ENCODE measurements at regions of chr19 and their contacts with region 1.

Region 1: GRCh38 chr19:33176670-33177416 is 17.3 kb upstream of the LRP3 start:
- DNase-seq: peak; percentile 95
- H3K4me3 ChIP-seq: peak overlapping the region; percentile 85
- H3K27ac ChIP-seq: peak overlapping the region; percentile 51
- H3K4me1 ChIP-seq: peaks cover 17% of the 10 kb centered on the region
- CTCF ChIP-seq: no peak; the same call in 1 of the 2 replicates

Region 2: DNA sequence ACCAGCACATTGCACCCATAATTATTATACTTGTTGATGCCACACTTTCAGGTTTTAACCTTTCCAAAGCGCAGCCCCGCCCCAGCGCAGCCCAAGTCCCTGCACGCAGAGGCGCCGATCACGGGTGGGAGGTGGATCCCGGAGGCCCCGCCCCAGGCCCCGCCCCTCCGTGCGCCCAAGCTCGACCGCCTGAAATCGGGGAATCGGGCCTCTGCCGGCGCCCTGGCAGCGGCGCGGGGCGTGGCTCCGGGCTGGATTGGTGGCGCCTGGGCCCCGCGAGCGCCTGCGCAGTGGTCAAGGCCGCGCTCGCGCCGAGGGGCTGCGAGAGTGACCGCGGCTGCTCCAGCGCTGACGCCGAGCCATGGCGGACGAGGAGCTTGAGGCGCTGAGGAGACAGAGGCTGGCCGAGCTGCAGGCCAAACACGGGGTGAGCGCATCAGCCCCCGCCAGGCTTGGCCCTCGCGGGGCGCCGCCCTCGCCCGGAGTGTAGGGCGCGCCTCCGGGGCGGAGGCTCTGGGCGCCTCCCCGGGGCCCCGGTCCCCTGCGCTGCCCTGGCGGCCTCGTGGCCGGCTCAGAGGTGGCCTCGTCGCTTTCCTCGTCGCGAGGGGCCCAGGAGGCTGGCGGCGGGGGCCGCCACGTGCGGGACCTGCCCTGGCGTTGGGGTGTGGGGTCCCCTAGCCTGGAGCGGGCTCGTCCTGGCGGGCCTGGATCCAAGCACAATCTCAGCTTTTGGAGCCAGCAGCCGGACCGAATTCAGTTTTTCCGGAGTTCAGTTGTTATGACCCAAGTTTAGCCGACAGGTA is 595.7 kb before region 1 on chr19 and contains the start of gene PDCD5:
- CTCF ChIA-PET with region 1: no interaction called
- POLR2A ChIA-PET with region 1: no interaction called
- intact Hi-C with region 1: loop called (anchors 5 kb)
- DNase-seq: peak; percentile 95
- H3K4me3 ChIP-seq: peak within 1 kb of the TSS; percentile 93
- H3K27ac ChIP-seq: peak within 1 kb of the TSS; percentile 32
- H3K4me1 ChIP-seq: peaks cover 10% of the 10 kb centered on the region
- CTCF ChIP-seq: no peak
- total RNA-seq, gene PDCD5: 162 and 200 TPM in 2 replicates

Region 3: GRCh38 chr19:32971715-32972540 is 204.9 kb before region 1 on chr19 and contains the starts of genes CEP89 and FAAP24:
- CTCF ChIA-PET with region 1: interaction called, 4 read pairs
- POLR2A ChIA-PET with region 1: interaction called, 3 read pairs
- intact Hi-C with region 1: loop called (anchors 2 kb)
- DNase-seq: peak; percentile 99
- H3K4me3 ChIP-seq: peak within 1 kb of the TSS; percentile 75
- H3K27ac ChIP-seq: peak within 1 kb of the TSS; percentile 35
- H3K4me1 ChIP-seq: peaks cover 5% of the 10 kb centered on the region
- CTCF ChIP-seq: no peak
- total RNA-seq, gene CEP89: 10.8 and 15.8 TPM in 2 replicates
- total RNA-seq, gene FAAP24: 5.4 and 12.1 TPM in 2 replicates

Region 4: GRCh38 chr19:33268162-33268991 is 91.5 kb after region 1 on chr19:
- CTCF ChIA-PET with region 1: no interaction called
- POLR2A ChIA-PET with region 1: no interaction called
- intact Hi-C with region 1: no loop called
- DNase-seq: no peak
- H3K4me3 ChIP-seq: no peak overlapping the region
- H3K27ac ChIP-seq: no peak overlapping the region
- H3K4me1 ChIP-seq: no peaks in the 10 kb centered on the region
- CTCF ChIP-seq: no peak

Region 5: DNA sequence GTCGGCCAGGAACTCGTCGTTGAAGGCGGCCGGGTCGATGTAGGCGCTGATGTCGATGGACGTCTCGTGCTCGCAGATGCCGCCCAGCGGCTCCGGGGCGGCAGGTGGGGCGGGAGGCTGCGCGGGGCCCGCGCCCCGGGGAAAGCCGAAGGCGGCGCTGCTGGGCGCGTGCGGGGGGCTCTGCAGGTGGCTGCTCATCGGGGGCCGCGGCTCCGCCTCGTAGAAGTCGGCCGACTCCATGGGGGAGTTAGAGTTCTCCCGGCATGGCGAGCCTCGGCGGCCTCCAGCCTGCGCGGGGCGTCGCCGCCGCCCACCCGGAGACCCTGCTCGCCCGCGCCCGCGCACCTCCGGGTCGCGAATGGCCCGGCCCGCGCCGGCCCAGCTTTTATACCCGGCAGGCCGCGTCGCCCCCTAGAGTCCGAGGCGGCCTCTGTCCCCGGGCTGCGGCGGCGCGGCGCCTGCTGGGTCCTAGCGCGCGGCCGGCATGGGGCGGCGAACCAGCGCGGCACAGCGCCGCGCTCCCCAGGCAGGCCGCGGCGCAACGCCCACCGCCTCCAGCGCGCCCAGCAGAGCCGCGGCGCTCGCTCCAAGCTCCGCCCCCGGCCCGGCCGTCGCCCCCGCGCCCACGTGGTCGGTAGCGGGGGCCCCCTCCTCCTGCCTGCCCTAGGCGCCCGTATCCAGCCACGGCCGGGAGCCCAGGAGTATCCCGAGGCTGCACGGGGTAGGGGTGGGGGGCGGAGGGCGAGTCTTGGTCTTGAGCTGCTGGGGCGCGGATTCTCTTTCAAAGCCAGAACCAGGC is 125.5 kb after region 1 on chr19 and contains the start of gene CEBPA:
- CTCF ChIA-PET with region 1: no interaction called
- POLR2A ChIA-PET with region 1: no interaction called
- intact Hi-C with region 1: loop called (anchors 1 kb)
- DNase-seq: peak; percentile 84
- H3K4me3 ChIP-seq: peak within 1 kb of the TSS; percentile 70
- H3K27ac ChIP-seq: no peak within 1 kb of the TSS
- H3K4me1 ChIP-seq: peaks cover 4% of the 10 kb centered on the region
- CTCF ChIP-seq: peak; percentile 63
- total RNA-seq, gene CEBPA: 2.1 and 2.8 TPM in 2 replicates

Measured in OCI-LY7 (cell line).